Transverse colon (tissue), 4 donors: ENCODE measurements at regions of chr10 and their contacts with region 1.

Region 1: DNA sequence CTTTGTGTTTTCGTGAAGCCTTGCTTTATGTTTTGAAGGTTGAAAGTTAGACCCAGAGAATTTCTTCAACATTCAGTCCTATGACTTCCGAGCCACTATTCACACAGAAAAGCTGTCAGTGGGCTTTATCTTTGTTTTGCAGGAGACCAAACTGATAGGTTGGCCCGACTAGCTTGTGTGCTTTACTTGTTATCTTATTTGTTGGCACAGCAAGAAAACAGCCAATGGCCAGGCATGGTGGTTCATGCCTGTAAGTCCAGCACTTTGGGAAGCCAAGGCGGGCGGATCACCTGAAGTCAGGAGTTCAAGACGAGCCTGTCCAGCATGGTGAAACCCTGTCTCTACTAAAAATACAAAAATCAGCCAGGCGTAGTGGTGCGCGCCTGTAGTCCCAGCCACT is 16.0 kb upstream of the GDI2 start:
- DNase-seq: no peak
- H3K4me3 ChIP-seq: no peak overlapping the region
- H3K27ac ChIP-seq: no peak overlapping the region
- H3K4me1 ChIP-seq: peaks cover 0 to 7% (median 3%) of the 10 kb centered on the region in 4 donors
- H3K27me3 ChIP-seq: no peaks in the 10 kb centered on the region
- CTCF ChIP-seq: no peak
- EP300 ChIP-seq: no peak
- POLR2A ChIP-seq: no peak

Region 2: GRCh38 chr10:5813287-5814109 is 15.8 kb before region 1 on chr10 and contains the start of gene GDI2:
- in situ Hi-C with region 1: no loop called
- intact Hi-C with region 1: no loop called
- DNase-seq: peak; percentile 98
- H3K4me3 ChIP-seq: peak within 1 kb of the TSS; percentile 76 to 97 (median 94)
- H3K27ac ChIP-seq: peak within 1 kb of the TSS; percentile 98 to 100 (median 100)
- H3K4me1 ChIP-seq: peaks cover 18 to 46% (median 39%) of the 10 kb centered on the region in 4 donors
- H3K27me3 ChIP-seq: no peaks in the 10 kb centered on the region
- CTCF ChIP-seq: no peak
- EP300 ChIP-seq: no peak
- POLR2A ChIP-seq: peak; percentile 99
- total RNA-seq, gene GDI2: 122 to 270 (median 203) TPM

Region 3: DNA sequence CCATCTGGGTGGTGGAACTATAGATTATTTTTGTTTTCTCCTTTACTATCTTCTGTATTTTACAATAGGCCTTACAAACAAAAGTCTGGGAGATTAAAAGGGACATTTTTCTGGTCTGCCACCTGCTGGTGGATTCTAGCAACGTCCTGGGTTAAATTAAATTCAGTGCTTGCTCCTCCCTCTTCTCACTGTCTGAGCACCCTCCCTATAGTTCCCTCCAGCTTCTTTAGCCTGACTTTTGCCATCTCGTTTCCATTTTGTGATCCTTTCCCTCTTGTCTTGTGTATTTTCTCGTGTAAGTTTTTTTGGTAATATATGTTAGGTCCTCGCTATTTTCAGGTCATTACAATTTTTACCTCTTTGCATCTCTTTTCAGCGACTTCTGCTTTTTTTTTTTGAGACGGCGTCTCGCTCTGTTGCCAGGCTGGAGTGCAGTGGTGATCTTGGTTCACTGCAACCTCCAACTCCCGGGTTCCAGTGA is 44.3 kb after region 1 on chr10:
- in situ Hi-C with region 1: no loop called
- intact Hi-C with region 1: loop called (anchors 1 kb)
- DNase-seq: peak; percentile 76
- H3K4me3 ChIP-seq: no peak overlapping the region
- H3K27ac ChIP-seq: no peak overlapping the region
- H3K4me1 ChIP-seq: peaks cover 0 to 6% (median 0%) of the 10 kb centered on the region in 4 donors
- H3K27me3 ChIP-seq: no peaks in the 10 kb centered on the region
- CTCF ChIP-seq: peak; percentile 73 to 83 (median 79)
- EP300 ChIP-seq: no peak
- POLR2A ChIP-seq: no peak